K562 (cell line): ENCODE measurements at regions of chr10 and their contacts with region 1.

Region 1: DNA sequence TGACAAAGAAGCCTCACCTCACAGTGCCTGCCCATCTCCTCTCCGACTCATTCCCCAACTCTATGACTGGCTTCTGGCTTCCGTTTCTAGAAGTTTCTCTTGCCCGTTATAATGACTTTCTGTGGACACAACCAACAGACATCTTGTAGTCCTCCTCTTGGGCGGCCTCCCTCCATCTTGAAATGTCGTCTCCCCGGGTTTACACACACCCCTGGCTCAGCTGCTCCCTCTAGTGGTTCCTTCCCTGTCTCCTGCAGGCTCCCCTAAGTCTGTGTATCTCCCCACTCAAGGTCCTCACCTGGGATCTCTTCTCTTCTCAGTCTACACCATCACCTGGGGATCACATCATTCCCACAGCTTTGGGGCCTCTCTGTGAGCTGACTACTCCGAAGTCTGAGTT is 123.4 kb upstream of the NEBL start:
- DNase-seq: peak; percentile 75 to 84 (median 79)
- ATAC-seq: peak; percentile 98
- H3K4me3 ChIP-seq: no peak overlapping the region
- H3K27ac ChIP-seq: no peak overlapping the region
- H3K4me1 ChIP-seq: no peaks in the 10 kb centered on the region; a peak in 1 of 5 replicates
- H3K27me3 ChIP-seq: no peaks in the 10 kb centered on the region
- CTCF ChIP-seq: peak; percentile 76 to 90 (median 81)
- EP300 ChIP-seq: no peak
- POLR2A ChIP-seq: no peak
- RAD21 ChIP-seq: peak; percentile 67 to 78

Region 2: DNA sequence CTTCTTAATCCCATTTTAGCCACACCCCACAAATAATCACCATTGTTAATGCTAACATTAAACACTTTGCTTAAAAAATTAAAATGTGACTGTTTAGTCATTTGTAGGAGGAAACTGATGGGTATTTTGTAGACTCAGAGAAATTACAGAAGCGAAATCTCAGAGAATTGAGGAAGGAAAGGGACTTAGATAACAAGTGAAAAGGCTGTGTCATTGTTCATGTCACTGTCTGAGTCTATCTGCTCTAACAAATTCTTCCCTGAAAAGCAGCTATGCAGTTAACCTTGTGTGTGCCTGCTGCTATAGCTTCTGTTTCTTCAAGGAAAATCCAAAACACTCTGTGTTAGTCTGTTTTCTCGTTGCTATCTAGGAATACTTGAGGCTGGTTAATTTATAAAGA is 1245.2 kb before region 1 on chr10:
- CTCF ChIA-PET with region 1: no interaction called
- POLR2A ChIA-PET with region 1: no interaction called
- in situ Hi-C with region 1: no loop called
- intact Hi-C with region 1: no loop called
- DNase-seq: peak in 1 of 4 experiments; percentile 7
- ATAC-seq: no peak
- H3K4me3 ChIP-seq: no peak overlapping the region
- H3K27ac ChIP-seq: no peak overlapping the region
- H3K4me1 ChIP-seq: no peaks in the 10 kb centered on the region; a peak in 1 of 5 replicates
- H3K27me3 ChIP-seq: no peaks in the 10 kb centered on the region
- CTCF ChIP-seq: no peak
- EP300 ChIP-seq: no peak
- POLR2A ChIP-seq: no peak
- RAD21 ChIP-seq: no peak

Region 3: DNA sequence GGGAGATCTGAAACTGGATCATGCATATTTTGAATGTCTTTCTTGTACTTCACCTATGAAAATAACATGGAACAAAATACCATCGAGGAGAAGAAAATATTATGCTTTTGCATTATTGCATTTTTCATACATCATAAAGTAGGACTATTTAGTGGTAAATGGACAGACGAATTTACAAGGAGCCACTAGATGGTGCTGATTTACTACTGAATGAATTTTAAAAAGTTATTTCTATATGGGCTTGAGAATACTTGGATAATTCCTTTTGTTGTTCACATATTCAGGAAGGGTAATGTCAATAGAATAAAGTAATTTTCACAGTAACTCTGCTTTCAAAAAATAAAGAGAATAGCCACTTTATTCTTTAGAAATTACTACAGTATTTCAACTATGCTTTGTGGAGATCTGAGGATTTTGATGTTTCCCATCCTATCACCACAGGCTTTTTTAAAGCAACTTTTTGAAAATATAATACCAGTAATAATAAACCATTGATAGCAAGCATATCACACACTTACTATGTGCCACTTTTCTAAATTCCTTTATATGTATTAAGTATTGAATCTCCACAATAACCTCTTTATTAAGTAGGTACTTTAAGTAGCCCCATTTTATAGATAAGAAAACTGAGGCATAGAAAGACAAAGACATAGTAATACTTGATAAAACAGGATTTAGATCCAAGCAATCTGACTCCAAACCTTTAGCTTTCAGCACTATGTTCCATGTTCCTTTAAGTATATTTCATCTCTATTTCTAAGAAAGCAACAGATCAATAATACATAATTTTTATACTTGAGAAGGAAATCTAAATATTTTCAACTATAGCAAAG is 162.0 kb before region 1 on chr10:
- CTCF ChIA-PET with region 1: no interaction called
- POLR2A ChIA-PET with region 1: no interaction called
- in situ Hi-C with region 1: no loop called
- intact Hi-C with region 1: loop called (anchors 5 kb)
- DNase-seq: peak in 1 of 4 experiments; percentile 33
- ATAC-seq: peak; percentile 68
- H3K4me3 ChIP-seq: no peak overlapping the region
- H3K27ac ChIP-seq: no peak overlapping the region
- H3K4me1 ChIP-seq: no peaks in the 10 kb centered on the region
- H3K27me3 ChIP-seq: no peaks in the 10 kb centered on the region
- CTCF ChIP-seq: peak in 2 of 3 experiments; percentile 16 to 68; a peak in 3 of 6 replicates
- EP300 ChIP-seq: no peak
- POLR2A ChIP-seq: no peak
- RAD21 ChIP-seq: peak; percentile 67 to 84

Region 4: DNA sequence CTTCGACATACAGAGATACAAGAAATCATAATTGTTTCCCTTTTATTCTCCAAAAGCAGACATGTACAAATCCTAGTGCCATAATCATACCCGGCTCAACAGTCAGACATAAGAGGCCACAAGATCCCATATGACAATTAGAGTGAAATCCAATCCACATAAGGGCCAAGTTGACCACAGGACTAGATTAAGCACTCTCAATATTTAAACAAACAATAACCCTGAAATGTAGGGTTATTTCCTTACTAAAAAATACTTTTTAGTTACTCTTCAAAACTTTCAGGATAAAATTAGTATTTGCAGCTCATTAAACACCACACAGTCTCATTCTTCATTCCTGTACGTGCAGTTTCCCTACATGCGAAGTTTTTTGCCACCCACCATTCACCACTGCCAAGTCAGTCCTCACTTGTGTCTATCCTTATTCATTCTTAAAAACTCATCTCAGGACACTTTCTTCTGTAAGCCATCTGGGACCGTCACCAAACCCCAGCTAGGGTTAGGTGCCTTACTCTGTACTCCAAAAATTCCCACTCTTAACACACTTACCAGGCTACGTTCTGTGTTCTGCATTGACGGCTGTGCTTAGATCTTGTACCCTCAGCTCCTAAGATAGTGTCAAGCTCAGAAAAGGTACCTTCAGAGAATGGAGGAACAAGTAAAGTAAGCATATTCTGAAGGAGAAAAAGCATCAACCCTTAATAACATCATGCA is 75.6 kb before region 1 on chr10:
- CTCF ChIA-PET with region 1: no interaction called
- POLR2A ChIA-PET with region 1: no interaction called
- in situ Hi-C with region 1: no loop called
- intact Hi-C with region 1: no loop called
- DNase-seq: no peak
- ATAC-seq: no peak
- H3K4me3 ChIP-seq: no peak overlapping the region
- H3K27ac ChIP-seq: no peak overlapping the region
- H3K4me1 ChIP-seq: no peaks in the 10 kb centered on the region; a peak in 1 of 5 replicates
- H3K27me3 ChIP-seq: no peaks in the 10 kb centered on the region
- CTCF ChIP-seq: no peak
- EP300 ChIP-seq: no peak
- POLR2A ChIP-seq: no peak
- RAD21 ChIP-seq: no peak

Region 5: GRCh38 chr10:20970708-20971107 is 49.8 kb before region 1 on chr10:
- CTCF ChIA-PET with region 1: no interaction called
- POLR2A ChIA-PET with region 1: no interaction called
- in situ Hi-C with region 1: no loop called
- intact Hi-C with region 1: no loop called
- DNase-seq: no peak
- ATAC-seq: no peak
- H3K4me3 ChIP-seq: no peak overlapping the region
- H3K27ac ChIP-seq: no peak overlapping the region
- H3K4me1 ChIP-seq: no peaks in the 10 kb centered on the region
- H3K27me3 ChIP-seq: no peaks in the 10 kb centered on the region
- CTCF ChIP-seq: no peak
- EP300 ChIP-seq: no peak
- POLR2A ChIP-seq: no peak
- RAD21 ChIP-seq: no peak